ENCODE measurements at regions of chr2 and their contacts with region 1.

Region 1: GRCh38 chr2:15159751-15160177 is 401.4 kb downstream of the NBAS start:
- DNase-seq: peak; percentile 47
- H3K4me3 ChIP-seq: no peak overlapping the region
- H3K27ac ChIP-seq: no peak overlapping the region
- H3K4me1 ChIP-seq: peaks cover 4% of the 10 kb centered on the region
- H3K27me3 ChIP-seq: no peaks in the 10 kb centered on the region
- CTCF ChIP-seq: peak; percentile 69

Region 2: GRCh38 chr2:13652531-13653313 is 1507.0 kb before region 1 on chr2:
- CTCF ChIA-PET with region 1: interaction called, 30 read pairs
- dilution Hi-C with region 1: no loop called
- in situ Hi-C with region 1: no loop called
- intact Hi-C with region 1: no loop called
- DNase-seq: peak; percentile 75
- H3K4me3 ChIP-seq: no peak overlapping the region
- H3K27ac ChIP-seq: peak overlapping the region; percentile 91
- H3K4me1 ChIP-seq: peaks cover 20% of the 10 kb centered on the region
- H3K27me3 ChIP-seq: no peaks in the 10 kb centered on the region
- CTCF ChIP-seq: no peak

Region 3: DNA sequence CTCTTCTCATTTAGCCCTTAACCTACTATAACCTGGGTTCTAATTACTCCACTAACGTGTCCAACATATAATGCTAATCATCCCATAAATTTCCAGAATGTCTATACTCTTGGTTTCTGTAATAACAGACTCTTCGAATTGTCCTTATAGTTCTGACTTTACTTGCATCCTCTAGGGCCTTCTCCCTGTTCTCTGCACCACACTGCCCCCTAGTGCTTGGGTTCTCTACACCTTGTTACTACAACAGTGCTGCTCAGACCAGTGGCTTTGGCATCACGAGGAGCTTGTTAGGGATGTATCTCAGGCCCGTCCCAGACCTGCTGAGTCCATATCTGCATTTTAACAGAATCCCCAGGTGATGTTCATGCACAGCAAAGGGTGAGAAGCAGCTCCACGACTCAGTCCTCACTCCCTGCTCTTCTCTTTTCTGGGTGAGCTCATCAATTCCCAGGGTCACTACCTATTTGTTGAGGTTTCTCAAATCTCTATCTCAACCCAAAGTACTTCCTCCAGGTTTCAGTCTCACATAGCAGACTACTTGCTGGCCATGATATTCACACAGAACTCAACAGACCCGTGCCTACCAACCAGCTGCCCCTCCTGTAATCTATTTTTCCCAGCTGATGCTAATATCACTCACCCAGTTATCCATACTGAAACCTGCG is 417.4 kb after region 1 on chr2:
- CTCF ChIA-PET with region 1: no interaction called
- dilution Hi-C with region 1: no loop called
- in situ Hi-C with region 1: no loop called
- intact Hi-C with region 1: loop called (anchors 5 kb)
- DNase-seq: peak; percentile 66
- H3K4me3 ChIP-seq: no peak overlapping the region
- H3K27ac ChIP-seq: no peak overlapping the region
- H3K4me1 ChIP-seq: peaks cover 5% of the 10 kb centered on the region
- H3K27me3 ChIP-seq: no peaks in the 10 kb centered on the region
- CTCF ChIP-seq: peak; percentile 91 to 94